BJ (cell line): ENCODE measurements at regions of chr16 and their contacts with region 1.

Region 1: DNA sequence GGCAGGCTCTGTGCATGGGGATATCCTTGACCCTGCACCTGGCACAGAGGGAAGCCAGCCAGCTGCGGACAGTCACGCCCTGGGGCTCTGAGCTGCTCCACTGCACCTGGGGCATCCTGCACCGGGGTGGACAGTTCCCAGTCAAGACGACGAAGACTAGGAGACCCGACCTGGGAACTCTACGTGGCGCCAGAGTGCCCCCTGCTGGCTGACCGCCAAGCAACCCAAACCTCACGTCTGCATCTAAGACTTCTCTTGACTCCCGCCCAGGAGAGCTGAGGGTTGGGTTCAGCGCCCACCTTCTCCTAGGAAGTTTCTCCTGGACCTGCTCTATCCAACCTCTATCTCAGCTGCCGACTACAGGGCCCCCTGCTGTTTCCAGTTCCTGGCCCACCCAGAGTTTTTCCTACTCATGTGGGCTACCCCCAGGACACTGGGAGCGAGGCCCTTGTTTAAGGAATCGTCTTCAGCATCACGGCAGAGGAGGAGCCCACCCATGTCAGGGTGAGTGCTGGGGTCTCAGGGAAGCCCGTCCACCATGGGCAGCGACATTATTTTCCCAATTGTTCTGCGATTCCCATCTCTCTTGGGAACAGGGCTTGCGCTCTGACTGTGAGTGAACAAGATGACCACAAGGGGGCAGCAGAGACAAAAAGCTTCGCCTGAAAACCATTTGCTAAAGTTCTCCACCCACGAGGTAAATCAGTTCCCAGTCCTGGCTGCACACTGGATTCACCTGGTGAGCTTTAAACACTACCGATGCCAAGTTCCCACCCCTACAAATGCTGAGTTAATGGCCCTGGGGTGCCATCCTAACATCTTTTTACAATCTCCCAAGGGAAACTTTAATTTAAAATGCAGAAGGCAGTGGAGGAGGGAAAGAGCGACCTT is 29.3 kb downstream of the TLE7 start:
- DNase-seq: no peak
- H3K4me3 ChIP-seq: no peak overlapping the region
- H3K27me3 ChIP-seq: peaks cover 5% of the 10 kb centered on the region
- CTCF ChIP-seq: peak; percentile 86

Region 2: GRCh38 chr16:71440669-71441347 is 28.3 kb after region 1 on chr16:
- CTCF ChIA-PET with region 1: interaction called, 13 read pairs
- POLR2A ChIA-PET with region 1: no interaction called
- DNase-seq: no peak
- H3K4me3 ChIP-seq: no peak overlapping the region
- H3K27me3 ChIP-seq: no peaks in the 10 kb centered on the region
- CTCF ChIP-seq: no peak

Region 3: DNA sequence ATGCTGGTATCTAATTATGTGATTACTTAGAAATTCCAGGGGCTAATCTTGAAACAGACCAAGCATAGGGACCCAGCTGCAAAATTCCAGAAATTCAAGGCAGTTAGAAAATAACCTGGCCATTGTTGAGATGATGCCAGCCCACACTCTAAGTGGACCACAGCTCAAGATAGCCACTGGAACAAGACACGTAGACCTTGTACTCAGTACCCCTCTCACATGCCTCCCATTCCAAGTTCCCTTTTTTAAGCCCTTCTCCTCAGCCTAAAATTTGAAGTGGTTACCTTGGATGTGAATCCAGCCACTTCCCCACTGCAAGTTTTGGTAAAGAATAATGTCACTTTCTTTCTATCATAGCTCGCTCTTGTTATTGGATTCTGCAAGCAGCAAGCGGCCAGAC is 80.7 kb after region 1 on chr16:
- CTCF ChIA-PET with region 1: interaction called, 170 read pairs
- POLR2A ChIA-PET with region 1: no interaction called
- DNase-seq: no peak
- H3K4me3 ChIP-seq: no peak overlapping the region
- H3K27me3 ChIP-seq: no peaks in the 10 kb centered on the region; the same call in 1 of the 2 replicates
- CTCF ChIP-seq: no peak

Region 4: DNA sequence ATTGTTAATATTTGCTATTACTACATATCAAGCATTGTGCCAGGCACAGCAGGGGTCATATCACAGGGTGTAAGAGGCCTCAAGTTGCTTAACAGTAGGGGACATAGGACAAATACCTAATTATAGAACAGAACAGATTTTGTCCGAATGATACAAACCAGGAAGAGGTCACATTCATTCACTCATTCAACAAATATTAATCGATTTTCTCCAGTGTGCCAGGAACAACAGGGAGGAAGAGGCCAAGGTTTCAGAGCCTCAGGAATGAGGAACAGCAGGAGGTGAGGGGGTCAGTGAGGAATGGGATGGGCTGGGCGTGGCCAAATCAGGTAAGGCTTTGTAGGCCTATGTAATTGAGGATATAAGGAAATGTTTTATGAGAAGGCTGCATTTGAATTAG is 102.5 kb after region 1 on chr16:
- CTCF ChIA-PET with region 1: interaction called, 10 read pairs
- POLR2A ChIA-PET with region 1: no interaction called
- DNase-seq: no peak
- H3K4me3 ChIP-seq: no peak overlapping the region
- H3K27me3 ChIP-seq: peaks cover 2% of the 10 kb centered on the region; the same call in 1 of the 2 replicates
- CTCF ChIP-seq: no peak